AG04449 (cell line): ENCODE measurements at regions of chr1 and their contacts with region 1.

Region 1: GRCh38 chr1:22416555-22417454 is 34.8 kb upstream of the ZBTB40 start:
- DNase-seq: no peak
- H3K4me3 ChIP-seq: no peak overlapping the region
- CTCF ChIP-seq: peak; percentile 99

Region 2: GRCh38 chr1:22077728-22078127 is 339.1 kb before region 1 on chr1:
- CTCF ChIA-PET with region 1: no interaction called
- POLR2A ChIA-PET with region 1: no interaction called
- DNase-seq: no peak
- H3K4me3 ChIP-seq: no peak overlapping the region
- CTCF ChIP-seq: no peak

Region 3: DNA sequence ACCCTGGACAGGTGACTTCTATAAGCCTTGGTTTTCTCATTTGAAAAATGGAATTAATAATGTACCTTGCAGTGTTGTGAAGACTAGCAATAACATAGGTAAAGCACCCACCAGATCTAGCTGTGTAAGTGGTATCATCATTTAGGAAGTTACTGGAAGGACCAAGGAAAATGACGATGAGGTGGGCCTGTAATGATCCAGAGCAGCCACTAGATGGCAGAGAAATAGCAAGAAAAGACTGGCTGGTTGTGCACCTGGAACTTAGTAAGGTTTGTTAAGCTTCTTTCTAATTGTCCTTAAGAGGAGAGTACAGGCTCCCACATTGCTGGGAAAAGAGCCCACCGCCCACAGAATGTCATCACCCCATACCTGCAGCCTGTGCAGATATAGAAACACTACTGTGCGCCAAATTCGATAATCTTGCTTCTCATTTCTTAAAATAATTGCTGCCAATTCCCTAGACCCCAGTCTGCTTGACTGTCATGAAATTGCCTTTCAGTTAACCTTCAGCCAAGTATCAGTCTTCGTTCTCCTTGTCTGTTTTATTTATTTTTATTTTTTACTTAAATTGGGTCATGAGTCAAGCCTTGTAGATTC is 311.1 kb before region 1 on chr1:
- CTCF ChIA-PET with region 1: interaction called, 75 read pairs
- POLR2A ChIA-PET with region 1: no interaction called
- DNase-seq: no peak
- H3K4me3 ChIP-seq: no peak overlapping the region
- CTCF ChIP-seq: peak; percentile 78

Region 4: GRCh38 chr1:22114083-22115012 is 302.5 kb before region 1 on chr1:
- CTCF ChIA-PET with region 1: interaction called, 10 read pairs
- POLR2A ChIA-PET with region 1: no interaction called
- DNase-seq: no peak
- H3K4me3 ChIP-seq: no peak overlapping the region
- CTCF ChIP-seq: no peak

Region 5: GRCh38 chr1:22131875-22132486 is 284.8 kb before region 1 on chr1:
- CTCF ChIA-PET with region 1: interaction called, 13 read pairs
- POLR2A ChIA-PET with region 1: no interaction called
- DNase-seq: no peak
- H3K4me3 ChIP-seq: no peak overlapping the region
- CTCF ChIP-seq: peak; percentile 61

Region 6: GRCh38 chr1:22184892-22185612 is 231.8 kb before region 1 on chr1:
- CTCF ChIA-PET with region 1: no interaction called
- POLR2A ChIA-PET with region 1: no interaction called
- DNase-seq: no peak
- H3K4me3 ChIP-seq: no peak overlapping the region
- CTCF ChIP-seq: no peak

Region 7: DNA sequence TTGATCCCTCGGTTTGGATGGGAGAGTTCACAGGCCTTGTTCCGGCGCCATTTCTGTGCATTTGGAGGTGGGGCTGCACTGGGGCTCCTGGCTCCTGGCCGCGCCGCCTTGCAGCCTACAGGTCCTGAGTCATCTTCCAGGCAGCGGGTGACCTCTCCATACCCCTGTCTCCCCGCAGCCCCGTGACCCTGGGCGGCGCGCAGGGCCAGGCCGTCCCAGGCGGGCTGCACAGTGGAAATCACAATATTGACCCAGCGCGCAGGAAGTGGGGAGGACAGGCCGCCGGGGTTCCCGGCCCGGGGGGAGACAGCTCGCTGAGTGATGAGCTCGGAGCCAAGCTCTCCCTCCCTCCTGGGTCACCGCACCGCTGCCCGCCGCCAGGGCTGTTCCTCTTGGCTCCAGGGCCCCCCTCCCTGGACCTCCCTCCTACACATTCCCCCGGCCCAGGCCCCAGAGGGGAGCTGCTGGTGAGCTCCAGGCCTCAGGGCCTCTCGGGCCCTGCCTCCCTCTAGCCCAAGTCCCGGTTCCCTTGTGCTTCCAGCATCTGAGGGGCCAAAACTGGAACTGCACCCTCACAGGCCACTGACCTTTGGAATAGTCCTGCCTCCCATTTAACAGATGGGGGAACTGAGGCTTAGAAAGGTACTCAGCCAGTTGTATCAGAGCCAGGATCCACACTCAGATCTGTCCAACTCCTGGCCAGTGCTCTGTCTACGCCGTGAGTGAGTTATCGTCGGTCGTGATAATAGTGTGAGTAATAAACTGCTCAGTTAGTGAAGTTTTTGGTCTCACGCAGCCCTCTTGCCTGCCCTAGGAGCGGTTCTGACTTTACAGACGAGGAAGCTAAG is 131.0 kb before region 1 on chr1:
- CTCF ChIA-PET with region 1: no interaction called
- POLR2A ChIA-PET with region 1: no interaction called
- DNase-seq: no peak
- H3K4me3 ChIP-seq: no peak overlapping the region
- CTCF ChIP-seq: no peak

Region 8: GRCh38 chr1:22529901-22530621 is 113.3 kb after region 1 on chr1:
- CTCF ChIA-PET with region 1: interaction called, 12 read pairs
- POLR2A ChIA-PET with region 1: no interaction called
- DNase-seq: no peak
- H3K4me3 ChIP-seq: no peak overlapping the region
- CTCF ChIP-seq: no peak

Region 9: GRCh38 chr1:22635436-22635835 is 218.6 kb after region 1 on chr1:
- CTCF ChIA-PET with region 1: interaction called, 330 read pairs
- POLR2A ChIA-PET with region 1: no interaction called
- DNase-seq: no peak
- H3K4me3 ChIP-seq: no peak overlapping the region
- CTCF ChIP-seq: no peak

Region 10: DNA sequence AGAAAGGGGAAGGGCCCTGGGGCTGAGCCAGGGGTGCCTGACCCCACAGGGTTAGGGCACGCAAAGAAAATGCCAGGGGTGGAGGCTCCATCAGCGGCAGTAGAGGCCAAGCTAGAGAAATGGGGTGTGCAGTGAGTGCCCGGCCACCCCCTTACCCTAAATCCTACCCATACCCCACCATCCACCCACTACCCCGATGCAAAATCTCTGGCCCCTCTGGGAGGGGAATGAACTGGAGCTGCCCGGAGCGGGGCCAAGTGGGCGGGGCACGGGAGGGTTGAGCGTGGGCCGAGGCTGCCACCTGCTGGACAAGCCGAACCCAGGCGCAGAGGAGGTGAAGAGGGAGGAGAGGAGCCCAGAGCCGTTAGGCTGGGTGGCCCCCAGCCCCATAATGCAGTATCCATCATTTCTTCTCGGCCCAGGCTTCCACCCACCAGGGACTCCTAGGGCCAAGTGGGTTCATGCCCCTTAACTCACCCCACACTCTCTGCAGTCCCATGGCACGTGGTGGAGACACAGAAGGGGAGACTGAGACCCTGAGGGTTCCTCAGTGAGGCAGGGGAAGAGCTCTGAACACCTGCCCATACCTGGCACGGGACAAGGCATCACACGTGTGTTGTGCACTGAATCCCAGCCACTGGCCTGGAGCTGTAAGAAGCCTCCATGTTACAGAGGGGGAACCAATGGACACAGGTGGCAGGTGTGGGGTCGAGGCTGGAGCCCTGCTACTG is 225.3 kb after region 1 on chr1:
- CTCF ChIA-PET with region 1: interaction called, 330 read pairs
- POLR2A ChIA-PET with region 1: no interaction called
- DNase-seq: no peak
- H3K4me3 ChIP-seq: no peak overlapping the region
- CTCF ChIP-seq: peak; percentile 93